ENCODE measurements at regions of chr2 and their contacts with region 1.

Region 1: DNA sequence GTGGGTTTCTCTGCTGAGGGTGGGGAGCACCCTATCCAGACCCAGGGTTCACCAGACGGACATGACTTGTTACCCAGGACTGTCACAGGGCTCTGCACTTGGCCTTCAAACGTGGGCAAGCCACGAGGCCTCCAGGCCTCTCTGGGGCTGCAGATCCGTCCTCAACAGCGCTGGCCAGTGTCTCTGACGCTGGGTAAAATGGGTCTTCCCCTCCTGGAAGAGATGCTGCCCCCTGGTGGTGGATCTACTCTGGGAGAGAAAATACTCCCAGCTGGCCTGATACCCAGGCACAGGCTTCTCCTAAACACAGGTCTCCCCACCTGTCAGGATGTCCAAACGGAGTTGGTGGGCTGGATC is 3.7 kb downstream of the GPR17 start:
- DNase-seq: peak; percentile 68
- H3K4me3 Mint-ChIP-seq: no peak overlapping the region
- H3K27ac Mint-ChIP-seq: no peak overlapping the region
- H3K4me1 Mint-ChIP-seq: peaks cover 5% of the 10 kb centered on the region
- H3K27me3 Mint-ChIP-seq: peaks cover 2% of the 10 kb centered on the region

Region 2: GRCh38 chr2:126914801-126915500 is 734.7 kb before region 1 on chr2:
- intact Hi-C with region 1: no loop called
- DNase-seq: no peak
- H3K4me3 Mint-ChIP-seq: no peak overlapping the region
- H3K27ac Mint-ChIP-seq: no peak overlapping the region
- H3K4me1 Mint-ChIP-seq: no peaks in the 10 kb centered on the region
- H3K27me3 Mint-ChIP-seq: no peaks in the 10 kb centered on the region

Region 3: GRCh38 chr2:127197475-127198385 is 451.9 kb before region 1 on chr2:
- intact Hi-C with region 1: loop called (anchors 1 kb)
- DNase-seq: peak; percentile 13
- H3K4me3 Mint-ChIP-seq: peak overlapping the region; percentile 81
- H3K27ac Mint-ChIP-seq: peak overlapping the region; percentile 8
- H3K4me1 Mint-ChIP-seq: peaks cover 7% of the 10 kb centered on the region
- H3K27me3 Mint-ChIP-seq: peaks cover 4% of the 10 kb centered on the region

Region 4: DNA sequence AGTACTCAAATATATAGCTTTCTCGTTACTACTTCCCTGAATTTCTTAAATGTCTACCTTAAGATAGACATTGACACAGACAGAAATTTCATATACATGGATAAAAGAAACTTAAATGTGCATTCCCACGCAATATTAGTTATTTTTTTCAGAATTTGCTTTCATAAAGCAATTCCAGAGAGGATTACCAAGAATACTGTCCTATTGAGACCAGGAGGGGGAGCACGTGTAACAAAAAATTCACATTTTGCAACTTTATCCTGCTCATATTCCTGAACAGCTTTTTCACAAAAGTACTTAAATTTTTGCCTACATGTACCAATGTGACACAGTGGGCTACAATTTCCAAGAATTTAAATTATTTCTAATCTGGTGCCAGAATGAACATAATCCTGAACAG is 325.0 kb before region 1 on chr2:
- intact Hi-C with region 1: loop called (anchors 10 kb)
- DNase-seq: no peak
- H3K4me3 Mint-ChIP-seq: no peak overlapping the region
- H3K27ac Mint-ChIP-seq: no peak overlapping the region
- H3K4me1 Mint-ChIP-seq: peaks cover 7% of the 10 kb centered on the region
- H3K27me3 Mint-ChIP-seq: no peaks in the 10 kb centered on the region

Region 5: DNA sequence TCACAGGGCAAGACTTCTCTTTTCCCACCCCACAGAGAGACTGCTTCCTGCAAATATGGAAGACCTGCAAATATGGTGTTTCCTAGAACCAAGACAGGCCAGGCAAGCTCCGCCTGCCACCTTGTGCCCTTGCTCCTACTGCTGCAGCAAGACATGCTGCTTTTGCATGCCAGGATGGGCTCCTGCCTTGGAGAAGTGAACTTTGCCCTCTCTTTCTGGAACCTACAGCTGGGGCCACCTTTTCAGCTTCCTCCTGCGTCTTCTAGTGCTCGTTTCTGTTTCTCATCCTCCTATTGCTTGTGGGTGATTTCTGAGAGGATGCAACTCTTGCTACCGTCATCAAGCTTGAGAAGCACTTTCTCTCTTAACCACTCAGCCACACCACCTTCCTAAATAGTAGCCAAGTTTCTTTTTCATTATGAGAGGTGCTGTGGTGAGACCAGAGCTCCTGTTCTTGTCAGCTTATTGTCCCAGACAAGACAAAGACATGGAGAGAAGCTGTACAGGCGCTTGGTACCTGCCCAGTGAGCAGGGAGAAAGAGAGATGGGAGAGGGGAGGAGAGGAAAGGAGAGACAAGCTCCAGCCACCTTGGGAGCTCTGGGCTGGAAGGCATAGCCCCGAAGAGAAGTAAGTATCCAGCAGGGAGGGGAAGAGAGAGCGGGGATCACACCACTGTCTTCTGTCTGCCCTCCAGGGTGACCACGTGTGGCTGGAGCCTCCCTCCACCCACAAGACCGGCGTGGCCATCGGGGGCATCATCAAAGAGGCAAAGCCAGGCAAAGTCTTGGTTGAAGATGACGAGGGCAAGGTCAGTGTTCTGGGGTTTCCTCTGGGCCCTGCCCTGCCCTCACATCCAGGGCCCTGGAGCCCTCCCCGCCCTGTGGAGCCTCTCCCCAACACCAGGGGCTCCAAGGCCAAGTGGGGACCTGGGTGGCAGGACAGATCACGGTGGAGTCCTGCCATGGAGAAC is 85.9 kb before region 1 on chr2:
- intact Hi-C with region 1: loop called (anchors 1 kb)
- DNase-seq: peak; percentile 46
- H3K4me3 Mint-ChIP-seq: peak overlapping the region; percentile 12
- H3K27ac Mint-ChIP-seq: peak overlapping the region; percentile 30
- H3K4me1 Mint-ChIP-seq: peaks cover 16% of the 10 kb centered on the region
- H3K27me3 Mint-ChIP-seq: peaks cover 32% of the 10 kb centered on the region

Region 6: DNA sequence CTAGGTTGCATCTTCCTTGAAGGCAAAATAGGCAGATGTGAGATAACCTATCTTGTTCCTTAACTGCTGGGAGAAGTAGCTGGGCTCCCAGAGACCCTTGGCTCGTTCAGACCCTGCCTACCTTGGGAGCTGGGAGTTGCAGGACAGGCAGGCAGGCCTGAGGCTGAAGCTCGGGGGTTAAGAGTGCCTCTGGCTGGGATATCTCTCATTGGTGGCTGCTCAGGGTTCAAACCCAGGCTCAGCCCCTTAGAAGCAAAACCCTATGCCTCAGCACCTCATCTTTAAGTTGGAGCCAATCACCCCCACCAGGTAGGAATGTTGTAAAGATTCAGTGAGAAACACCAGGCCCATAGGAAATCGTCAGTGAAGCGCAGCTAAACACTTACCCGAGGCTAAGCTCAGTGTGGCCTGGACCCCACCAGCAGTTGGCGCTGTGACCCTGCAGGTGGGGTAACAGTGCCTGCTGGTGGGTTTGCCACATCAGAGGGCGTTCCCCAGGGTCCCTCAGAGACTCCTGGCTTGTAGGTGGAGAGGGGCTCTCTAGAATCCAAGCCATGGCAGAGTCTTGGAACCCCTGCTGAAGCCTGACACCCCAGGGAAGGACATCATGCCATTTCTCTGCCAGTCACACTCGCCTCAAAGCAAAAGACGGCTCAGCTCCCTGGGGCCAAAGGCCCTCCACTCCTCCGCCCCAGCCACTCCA is 58.3 kb before region 1 on chr2:
- intact Hi-C with region 1: loop called (anchors 1 kb)
- DNase-seq: peak; percentile 37
- H3K4me3 Mint-ChIP-seq: no peak overlapping the region
- H3K27ac Mint-ChIP-seq: no peak overlapping the region
- H3K4me1 Mint-ChIP-seq: no peaks in the 10 kb centered on the region
- H3K27me3 Mint-ChIP-seq: peaks cover 4% of the 10 kb centered on the region

Measured in activated T-helper 1 cell treated with anti-CD3 and anti-CD28 coated beads, Interleukin-12 subunit alpha, Interleukin-12 subunit beta, Interleukin-2, Interleukin-4 antibody, amounts not matched to agents 30 ng/mL and 10 ng/mL and 1 ng/mL, durations not matched to agents 14 hours and 24 hours and 36 hours (primary cell).